ENCODE measurements at regions of chr12 and their contacts with region 1.

Region 1: GRCh38 chr12:42144408-42145196 is at the start of gene GXYLT1:
- DNase-seq: peak; percentile 99
- total RNA-seq, gene GXYLT1: 16.3 and 21.9 TPM in 2 replicates

Region 2: GRCh38 chr12:42039176-42039575 is 105.4 kb before region 1 on chr12:
- in situ Hi-C with region 1: no loop called
- DNase-seq: no peak

Region 3: GRCh38 chr12:42325653-42326474 is 181.3 kb after region 1 on chr12 and contains the starts of genes PPHLN1 and ZCRB1:
- in situ Hi-C with region 1: loop called (anchors 25 kb)
- DNase-seq: peak; percentile 79
- total RNA-seq, gene PPHLN1: 31.0 and 53.1 TPM in 2 replicates
- total RNA-seq, gene ZCRB1: 53.7 and 63.9 TPM in 2 replicates

Measured in Caki2 (cell line).